ENCODE measurements at regions of chr6 and their contacts with region 1.

Region 1: DNA sequence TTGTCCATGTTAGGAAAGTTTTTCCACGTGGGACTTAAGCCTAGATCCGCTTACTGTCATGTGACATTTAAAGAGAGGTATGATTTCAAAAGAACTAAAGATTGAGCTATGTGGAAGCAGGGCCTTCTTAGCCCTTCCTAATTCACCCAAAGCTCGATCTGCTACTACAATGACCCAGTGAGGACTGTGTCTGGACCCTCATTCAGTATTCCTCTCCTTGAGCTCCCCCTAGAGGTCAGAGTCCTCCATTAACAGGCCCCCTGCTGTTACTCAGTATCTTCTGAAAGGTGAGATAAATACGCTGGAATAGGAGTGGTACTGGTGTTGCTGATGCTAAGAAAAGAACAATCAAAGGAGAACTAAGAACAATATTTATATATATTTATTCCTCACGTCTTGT is 414.0 kb downstream of the GJA1 start:
- DNase-seq: peak; percentile 48
- H3K4me3 ChIP-seq: no peak overlapping the region
- H3K27ac ChIP-seq: no peak overlapping the region
- H3K4me1 ChIP-seq: no peaks in the 10 kb centered on the region
- H3K27me3 ChIP-seq: no peaks in the 10 kb centered on the region
- CTCF ChIP-seq: peak; percentile 89 to 90

Region 2: GRCh38 chr6:121584586-121585369 is 264.7 kb before region 1 on chr6:
- CTCF ChIA-PET with region 1: no interaction called
- dilution Hi-C with region 1: no loop called
- in situ Hi-C with region 1: no loop called
- intact Hi-C with region 1: loop called (anchors 5 kb)
- DNase-seq: no peak
- H3K4me3 ChIP-seq: no peak overlapping the region
- H3K27ac ChIP-seq: no peak overlapping the region
- H3K4me1 ChIP-seq: no peaks in the 10 kb centered on the region
- H3K27me3 ChIP-seq: no peaks in the 10 kb centered on the region
- CTCF ChIP-seq: no peak

Region 3: DNA sequence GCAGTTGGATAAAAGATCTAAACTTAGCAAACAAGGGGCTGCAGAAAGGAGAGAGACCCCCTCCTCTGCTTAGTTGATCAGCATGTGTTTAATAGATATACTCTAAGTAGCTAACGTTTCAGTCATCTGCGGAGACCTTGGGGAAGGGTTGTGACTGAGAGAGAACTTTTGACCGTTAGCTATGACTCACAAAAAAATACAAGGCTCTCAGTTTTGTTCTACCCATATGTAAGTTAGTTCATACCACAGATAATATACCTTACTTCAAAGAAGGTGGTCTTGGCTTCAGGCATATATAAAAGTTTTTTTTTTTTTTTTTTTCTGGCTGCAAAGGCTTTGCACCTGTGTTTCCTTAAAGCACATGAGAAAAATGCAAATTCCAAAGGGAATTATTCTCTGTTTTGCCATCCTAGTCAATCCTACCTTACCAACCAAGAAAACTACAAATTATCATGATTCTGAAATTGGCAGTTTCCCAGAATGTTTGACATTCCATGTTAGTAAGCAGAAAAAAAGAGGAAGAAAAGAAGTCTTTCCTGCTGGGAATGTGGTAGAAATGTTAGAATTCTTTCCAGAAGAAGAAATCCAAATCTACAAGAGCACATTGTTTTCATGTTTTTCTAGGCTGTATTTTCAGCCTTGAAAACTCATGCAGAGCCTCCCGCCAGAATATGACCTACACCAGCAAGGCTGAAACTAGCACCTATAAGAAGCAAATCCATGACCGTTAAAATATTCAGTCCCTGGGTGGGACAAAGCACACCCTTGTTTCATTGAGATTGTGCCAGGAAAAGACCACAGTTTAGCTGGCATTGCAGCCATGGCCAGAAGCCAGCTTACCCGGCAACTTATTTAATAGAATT is 154.9 kb before region 1 on chr6:
- CTCF ChIA-PET with region 1: no interaction called
- dilution Hi-C with region 1: no loop called
- in situ Hi-C with region 1: no loop called
- intact Hi-C with region 1: loop called (anchors 10 kb)
- DNase-seq: no peak
- H3K4me3 ChIP-seq: no peak overlapping the region
- H3K27ac ChIP-seq: no peak overlapping the region
- H3K4me1 ChIP-seq: peaks cover 12% of the 10 kb centered on the region
- H3K27me3 ChIP-seq: no peaks in the 10 kb centered on the region
- CTCF ChIP-seq: no peak

Region 4: GRCh38 chr6:121816906-121817551 is 32.4 kb before region 1 on chr6:
- CTCF ChIA-PET with region 1: interaction called, 24 read pairs
- dilution Hi-C with region 1: no loop called
- in situ Hi-C with region 1: no loop called
- intact Hi-C with region 1: no loop called
- DNase-seq: no peak
- H3K4me3 ChIP-seq: no peak overlapping the region
- H3K27ac ChIP-seq: no peak overlapping the region
- H3K4me1 ChIP-seq: no peaks in the 10 kb centered on the region
- H3K27me3 ChIP-seq: no peaks in the 10 kb centered on the region
- CTCF ChIP-seq: no peak

Region 5: DNA sequence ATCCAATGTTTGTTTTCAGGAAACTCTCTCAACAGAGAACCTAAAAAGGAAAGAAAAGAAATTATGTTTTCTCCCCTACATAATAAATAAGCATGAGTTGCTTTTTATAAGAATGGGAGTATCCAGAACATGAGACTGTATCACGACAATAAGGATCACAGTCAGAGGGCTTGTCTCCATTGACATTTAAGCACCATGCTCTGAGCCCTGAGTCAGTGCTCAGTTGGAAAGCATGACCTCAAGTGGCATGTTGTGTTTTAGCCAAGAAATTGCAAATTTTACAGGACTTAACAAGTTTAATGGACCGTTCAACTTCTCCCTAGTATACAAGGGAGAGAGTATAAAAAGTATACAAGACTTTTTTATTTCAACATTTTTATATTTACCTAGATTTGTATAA is 17.6 kb after region 1 on chr6:
- CTCF ChIA-PET with region 1: no interaction called
- dilution Hi-C with region 1: no loop called
- in situ Hi-C with region 1: no loop called
- intact Hi-C with region 1: no loop called
- DNase-seq: no peak
- H3K4me3 ChIP-seq: no peak overlapping the region
- H3K27ac ChIP-seq: no peak overlapping the region
- H3K4me1 ChIP-seq: no peaks in the 10 kb centered on the region
- H3K27me3 ChIP-seq: no peaks in the 10 kb centered on the region
- CTCF ChIP-seq: no peak

Region 6: GRCh38 chr6:122033539-122034181 is 184.2 kb after region 1 on chr6:
- CTCF ChIA-PET with region 1: no interaction called
- dilution Hi-C with region 1: no loop called
- in situ Hi-C with region 1: loop called (anchors 25 kb)
- intact Hi-C with region 1: loop called (anchors 1 kb)
- DNase-seq: peak; percentile 47
- H3K4me3 ChIP-seq: no peak overlapping the region
- H3K27ac ChIP-seq: no peak overlapping the region
- H3K4me1 ChIP-seq: peaks cover 9% of the 10 kb centered on the region
- H3K27me3 ChIP-seq: no peaks in the 10 kb centered on the region
- CTCF ChIP-seq: peak; percentile 44 to 65

Region 7: DNA sequence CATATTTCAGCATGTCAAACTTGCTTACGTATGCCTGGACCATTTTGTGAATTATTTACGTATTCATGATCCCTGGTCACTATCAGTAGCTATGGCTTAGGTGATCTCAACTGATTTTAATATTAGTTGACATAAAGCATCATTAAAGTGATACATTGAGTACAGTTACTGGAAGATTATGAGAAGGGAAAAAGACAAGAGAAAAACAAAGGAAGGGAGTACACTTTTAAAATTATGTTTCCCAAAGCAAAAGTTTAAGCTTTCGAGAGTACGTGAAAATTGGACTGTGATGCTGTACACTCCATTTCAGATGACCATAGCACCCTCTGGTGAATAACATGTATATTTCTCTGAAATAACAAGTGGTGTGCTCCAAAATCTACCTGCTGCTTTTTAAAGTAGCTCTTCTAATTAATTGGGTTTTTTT is 334.9 kb after region 1 on chr6:
- CTCF ChIA-PET with region 1: no interaction called
- dilution Hi-C with region 1: no loop called
- in situ Hi-C with region 1: no loop called
- intact Hi-C with region 1: loop called (anchors 5 kb)
- DNase-seq: peak; percentile 4
- H3K4me3 ChIP-seq: no peak overlapping the region
- H3K27ac ChIP-seq: no peak overlapping the region
- H3K4me1 ChIP-seq: no peaks in the 10 kb centered on the region
- H3K27me3 ChIP-seq: no peaks in the 10 kb centered on the region
- CTCF ChIP-seq: peak; percentile 9 to 49

Measured in mammary epithelial cell (primary cell).